ENCODE measurements at regions of chr11 and their contacts with region 1.

Region 1: DNA sequence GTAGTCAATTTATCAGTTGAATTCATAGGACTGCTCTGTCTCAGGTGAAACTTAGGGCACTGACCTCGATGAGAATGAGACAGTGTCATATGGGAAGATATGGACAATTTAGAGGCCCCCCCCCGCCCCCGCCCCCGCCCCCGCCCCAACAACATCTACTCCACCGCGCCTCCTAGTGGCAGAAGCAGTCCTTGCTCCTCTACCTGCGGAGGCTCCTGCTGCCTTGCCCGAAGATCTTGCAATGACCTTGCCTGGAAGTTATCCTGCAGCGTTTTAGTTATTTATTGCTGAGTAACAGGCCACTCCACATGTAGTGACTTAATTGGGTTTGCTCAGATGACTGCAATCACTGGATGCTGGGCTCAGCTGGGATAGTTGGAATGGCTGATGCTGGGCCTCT is 15.2 kb downstream of the SERPINH1 start:
- DNase-seq: no peak
- H3K4me3 ChIP-seq: no peak overlapping the region
- H3K27ac ChIP-seq: no peak overlapping the region
- H3K27me3 ChIP-seq: no peaks in the 10 kb centered on the region
- CTCF ChIP-seq: peak; percentile 57

Region 2: GRCh38 chr11:75474878-75475766 is 102.1 kb before region 1 on chr11:
- CTCF ChIA-PET with region 1: no interaction called
- POLR2A ChIA-PET with region 1: no interaction called
- DNase-seq: no peak
- H3K4me3 ChIP-seq: peak overlapping the region; percentile 38
- H3K27ac ChIP-seq: peak overlapping the region; percentile 77
- H3K27me3 ChIP-seq: no peaks in the 10 kb centered on the region
- CTCF ChIP-seq: no peak

Region 3: GRCh38 chr11:75547580-75548058 is 29.6 kb before region 1 on chr11:
- CTCF ChIA-PET with region 1: interaction called, 17 read pairs
- POLR2A ChIA-PET with region 1: interaction called, 8 read pairs
- DNase-seq: no peak
- H3K4me3 ChIP-seq: no peak overlapping the region
- H3K27ac ChIP-seq: no peak overlapping the region
- H3K27me3 ChIP-seq: peaks cover 3% of the 10 kb centered on the region
- CTCF ChIP-seq: peak; percentile 90

Region 4: GRCh38 chr11:75554258-75555022 is 22.8 kb before region 1 on chr11:
- CTCF ChIA-PET with region 1: interaction called, 4 read pairs
- POLR2A ChIA-PET with region 1: interaction called, 85 read pairs
- DNase-seq: peak; percentile 100
- H3K4me3 ChIP-seq: peak overlapping the region; percentile 52
- H3K27ac ChIP-seq: peak overlapping the region; percentile 97
- H3K27me3 ChIP-seq: no peaks in the 10 kb centered on the region
- CTCF ChIP-seq: no peak

Region 5: DNA sequence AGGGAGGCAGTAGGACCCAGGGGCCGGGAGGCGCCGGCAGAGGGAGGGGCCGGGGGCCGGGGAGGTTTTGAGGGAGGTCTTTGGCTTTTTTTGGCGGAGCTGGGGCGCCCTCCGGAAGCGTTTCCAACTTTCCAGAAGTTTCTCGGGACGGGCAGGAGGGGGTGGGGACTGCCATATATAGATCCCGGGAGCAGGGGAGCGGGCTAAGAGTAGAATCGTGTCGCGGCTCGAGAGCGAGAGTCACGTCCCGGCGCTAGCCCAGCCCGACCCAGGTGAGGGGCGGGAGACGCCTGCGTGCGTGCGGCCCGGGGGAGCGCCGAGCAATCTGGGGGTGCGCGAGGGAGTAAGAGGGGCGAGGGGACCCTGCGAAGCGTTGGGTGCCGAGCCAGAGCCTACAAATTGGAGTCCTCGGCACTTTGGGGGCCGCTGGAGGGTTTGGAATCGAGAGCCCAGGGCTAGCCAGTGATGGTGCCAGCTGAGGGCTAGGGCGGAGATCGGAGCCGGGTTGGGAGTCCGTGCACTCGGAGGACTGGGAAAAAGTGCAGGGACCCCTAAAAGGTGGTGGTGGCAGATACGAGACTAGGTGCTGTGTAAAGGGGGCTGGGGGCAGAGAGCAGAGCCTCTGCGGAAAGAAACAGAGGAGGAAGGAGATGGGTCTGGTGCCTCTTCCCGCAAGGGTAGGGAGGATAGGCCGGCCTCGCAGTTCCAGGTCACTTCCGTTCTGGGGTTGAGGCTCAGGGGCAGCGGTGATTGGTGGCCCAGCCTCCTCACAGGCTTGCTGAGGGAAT is 15.0 kb before region 1 on chr11 and contains the start of gene SERPINH1:
- CTCF ChIA-PET with region 1: interaction called, 53 read pairs
- POLR2A ChIA-PET with region 1: interaction called, 85 read pairs
- DNase-seq: no peak
- H3K4me3 ChIP-seq: peak within 1 kb of the TSS; percentile 77
- H3K27ac ChIP-seq: peak within 1 kb of the TSS; percentile 97
- H3K27me3 ChIP-seq: no peaks in the 10 kb centered on the region
- CTCF ChIP-seq: no peak
- polyA plus RNA-seq, gene SERPINH1: 881 and 1,147 TPM in 2 replicates

Measured in AG04450 (cell line).